Heart left ventricle (tissue), 16 donors: ENCODE measurements at regions of chr22 and their contacts with region 1.

Region 1: DNA sequence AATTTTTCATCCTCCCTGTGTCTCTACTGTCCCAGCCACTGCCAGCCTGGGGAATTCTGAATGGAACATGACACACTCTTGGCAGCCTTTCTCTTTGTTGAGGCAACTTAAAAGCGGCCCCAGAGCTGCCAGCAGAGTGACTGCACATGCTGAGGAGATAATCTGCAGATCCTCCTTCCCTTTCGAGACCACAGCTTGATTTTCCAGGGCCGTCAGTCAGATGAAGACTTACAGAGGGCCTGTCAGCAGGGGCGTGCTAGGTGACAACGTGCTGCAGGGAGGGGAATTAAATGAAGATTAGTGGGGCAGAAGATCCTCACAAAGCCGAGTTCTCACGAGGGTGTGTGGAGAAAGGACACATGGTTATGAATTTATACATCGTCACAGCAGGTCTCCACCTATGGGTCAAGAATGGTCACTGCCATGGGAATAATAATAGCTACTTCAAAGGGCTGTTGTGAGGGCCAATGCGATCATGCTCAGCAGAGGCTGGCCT is 193.5 kb upstream of the PITPNB start:
- DNase-seq: peak in 4 of 5 donors; percentile 35 to 78 (median 63)
- ATAC-seq: peak; percentile 72 to 80 (median 76)
- H3K4me3 ChIP-seq: peak overlapping the region in 1 of 12 donors; percentile 27
- H3K27ac ChIP-seq: peak overlapping the region in 11 of 12 donors; percentile 27 to 75 (median 50)
- H3K4me1 ChIP-seq: peaks cover 0 to 39% (median 15%) of the 10 kb centered on the region in 12 donors
- H3K27me3 ChIP-seq: no peaks in the 10 kb centered on the region
- CTCF ChIP-seq: peak; percentile 20 to 59 (median 43)
- POLR2A ChIP-seq: no peak

Region 2: GRCh38 chr22:28231441-28231840 is 118.8 kb after region 1 on chr22:
- intact Hi-C with region 1: loop called in 1 of 10 experiments (anchors 10 kb)
- DNase-seq: no peak
- ATAC-seq: peak in 3 of 4 donors; percentile 50 to 76 (median 65)
- H3K4me3 ChIP-seq: no peak overlapping the region
- H3K27ac ChIP-seq: peak overlapping the region in 1 of 12 donors; percentile 7
- H3K4me1 ChIP-seq: peaks cover 0 to 35% (median 11%) of the 10 kb centered on the region in 12 donors
- H3K27me3 ChIP-seq: no peaks in the 10 kb centered on the region
- CTCF ChIP-seq: no peak
- POLR2A ChIP-seq: no peak